GM18951 (cell line): ENCODE measurements at regions of chr1 and their contacts with region 1.

Region 1: DNA sequence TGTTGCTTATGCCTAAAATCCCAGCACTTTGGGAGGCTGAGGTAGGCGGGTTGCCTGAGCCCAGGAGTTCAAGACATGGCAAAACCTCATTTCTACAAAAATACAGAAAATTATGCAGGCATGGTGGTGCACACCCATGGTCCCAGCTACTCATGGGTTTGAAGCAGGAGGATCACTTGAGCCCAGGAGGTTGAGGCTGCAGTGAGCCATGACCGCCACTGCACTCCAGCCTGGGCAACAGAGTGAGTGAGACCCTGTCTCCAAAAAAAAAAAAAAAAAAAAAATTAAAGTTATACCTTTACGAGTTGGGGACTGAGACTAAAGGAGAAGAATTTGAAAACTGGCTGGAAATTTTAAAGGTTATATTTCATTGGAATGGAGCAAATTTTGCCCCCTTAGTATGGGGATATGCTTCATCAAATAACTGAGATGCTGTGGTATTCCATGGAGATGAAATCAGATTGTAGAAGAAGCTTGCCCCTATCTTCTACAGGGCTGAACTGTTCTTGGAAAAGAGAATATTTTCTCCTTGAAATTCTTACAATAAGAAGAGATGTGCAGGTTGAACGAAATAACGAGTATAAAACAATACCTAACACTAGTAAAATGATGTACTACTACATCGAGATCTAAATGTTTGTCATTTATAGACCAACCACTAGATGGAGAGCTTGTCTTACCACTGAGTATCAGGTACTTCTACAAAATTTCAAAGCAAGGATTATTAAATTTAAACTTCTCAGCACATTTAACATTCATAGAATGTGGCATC is 34.9 kb upstream of the SCYL3 start:
- POLR2A ChIP-seq: no peak

Region 2: GRCh38 chr1:170670802-170671628 is 742.4 kb after region 1 on chr1:
- in situ Hi-C with region 1: loop called (anchors 25 kb)
- POLR2A ChIP-seq: no peak

Region 3: DNA sequence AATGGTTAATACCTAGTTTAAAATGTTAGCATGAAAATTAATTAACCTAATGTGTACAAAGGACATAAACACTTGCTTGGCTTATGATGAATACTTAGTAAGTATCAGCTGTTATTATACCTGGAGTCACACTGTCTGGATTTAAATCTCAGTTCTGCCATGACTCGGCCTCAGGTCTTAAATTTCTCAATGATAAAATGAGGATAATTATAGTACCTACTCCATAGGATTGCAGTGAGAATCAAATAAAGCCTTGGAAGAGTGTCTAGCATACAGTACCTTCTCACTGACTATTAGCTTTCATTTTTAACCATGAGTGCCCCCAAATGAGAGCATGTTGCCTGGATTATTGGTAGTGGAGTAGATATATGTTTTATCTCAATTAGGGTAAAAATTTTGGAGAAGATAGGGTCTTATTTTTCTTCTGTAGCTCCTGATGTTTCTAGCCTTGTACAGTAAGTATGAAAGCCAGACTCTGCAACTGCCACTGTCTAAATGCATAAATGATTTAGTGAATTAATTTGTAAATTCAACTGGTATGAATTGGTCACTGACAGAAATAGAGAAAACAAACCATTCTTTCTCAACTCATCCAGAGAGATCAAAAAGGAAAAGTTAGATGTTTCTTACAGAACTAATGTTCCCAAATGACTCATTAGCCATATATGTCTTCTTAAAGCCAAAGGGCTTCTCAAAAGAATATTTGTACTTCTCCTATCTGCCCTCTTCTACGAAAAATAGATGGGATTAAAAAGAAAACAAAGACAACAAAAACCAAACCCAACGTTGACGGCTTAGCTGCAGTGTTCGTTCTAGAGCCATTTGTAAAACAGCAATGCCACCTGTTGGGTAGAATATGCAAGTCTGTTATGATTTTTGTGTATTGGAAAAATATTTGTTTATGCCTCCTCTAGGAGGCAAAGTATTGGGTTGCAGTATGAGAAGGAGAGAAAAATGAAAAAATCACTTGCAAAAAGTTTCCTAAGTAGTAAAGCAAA is 952.9 kb after region 1 on chr1:
- in situ Hi-C with region 1: loop called (anchors 25 kb)
- POLR2A ChIP-seq: no peak